CD8-positive, alpha-beta T cell (primary cell): ENCODE measurements at regions of chr1 and their contacts with region 1.

Region 1: GRCh38 chr1:9629445-9630201 is 21.9 kb upstream of the PIK3CD start:
- DNase-seq: peak; percentile 50 to 92 (median 83)
- ATAC-seq: peak; percentile 42
- H3K4me3 ChIP-seq: peak overlapping the region; percentile 85 to 98
- H3K4me3 Mint-ChIP-seq: peak overlapping the region; percentile 98
- H3K27ac ChIP-seq: peak overlapping the region; percentile 79 to 81
- H3K27ac Mint-ChIP-seq: peak overlapping the region; percentile 98
- H3K4me1 ChIP-seq: peaks cover 66% of the 10 kb centered on the region
- H3K4me1 Mint-ChIP-seq: peaks cover 68% of the 10 kb centered on the region
- H3K27me3 ChIP-seq: no peaks in the 10 kb centered on the region
- H3K27me3 Mint-ChIP-seq: no peaks in the 10 kb centered on the region
- CTCF ChIP-seq: no peak

Region 2: GRCh38 chr1:8858888-8859706 is 770.5 kb before region 1 on chr1:
- CTCF ChIA-PET with region 1: no interaction called
- POLR2A ChIA-PET with region 1: no interaction called
- intact Hi-C with region 1: no loop called
- DNase-seq: peak in 7 of 9 experiments; percentile 37 to 76 (median 59)
- ATAC-seq: peak; percentile 79
- H3K4me3 ChIP-seq: no peak overlapping the region
- H3K4me3 Mint-ChIP-seq: no peak overlapping the region
- H3K27ac ChIP-seq: peak overlapping the region in 1 of 2 experiments; percentile 31
- H3K27ac Mint-ChIP-seq: peak overlapping the region; percentile 77
- H3K4me1 ChIP-seq: no peaks in the 10 kb centered on the region
- H3K4me1 Mint-ChIP-seq: peaks cover 15% of the 10 kb centered on the region
- H3K27me3 ChIP-seq: no peaks in the 10 kb centered on the region
- H3K27me3 Mint-ChIP-seq: no peaks in the 10 kb centered on the region
- CTCF ChIP-seq: peak; percentile 65

Region 3: GRCh38 chr1:9428601-9429341 is 200.9 kb before region 1 on chr1:
- CTCF ChIA-PET with region 1: no interaction called
- POLR2A ChIA-PET with region 1: no interaction called
- intact Hi-C with region 1: loop called in 1 of 2 experiments (anchors 5 kb)
- DNase-seq: peak; percentile 99 to 100 (median 100)
- ATAC-seq: peak; percentile 79
- H3K4me3 ChIP-seq: peak overlapping the region; percentile 51 to 54
- H3K4me3 Mint-ChIP-seq: peak overlapping the region; percentile 97
- H3K27ac ChIP-seq: peak overlapping the region; percentile 64 to 69
- H3K27ac Mint-ChIP-seq: peak overlapping the region; percentile 99
- H3K4me1 ChIP-seq: peaks cover 44% of the 10 kb centered on the region
- H3K4me1 Mint-ChIP-seq: peaks cover 51% of the 10 kb centered on the region
- H3K27me3 ChIP-seq: peaks cover 0 to 4% of the 10 kb centered on the region in 2 experiments
- H3K27me3 Mint-ChIP-seq: no peaks in the 10 kb centered on the region
- CTCF ChIP-seq: no peak

Region 4: GRCh38 chr1:9651565-9652378 is 22.1 kb after region 1 on chr1 and contains the start of gene PIK3CD:
- CTCF ChIA-PET with region 1: interaction called, 129 read pairs
- POLR2A ChIA-PET with region 1: interaction called, 357 read pairs
- intact Hi-C with region 1: loop called (anchors 1 kb)
- DNase-seq: peak in 8 of 9 experiments; percentile 21 to 76 (median 56)
- ATAC-seq: peak; percentile 45
- H3K4me3 ChIP-seq: peak within 1 kb of the TSS; percentile 86
- H3K4me3 Mint-ChIP-seq: peak within 1 kb of the TSS; percentile 100
- H3K27ac ChIP-seq: peak within 1 kb of the TSS; percentile 68 to 78
- H3K27ac Mint-ChIP-seq: peak within 1 kb of the TSS; percentile 99
- H3K4me1 ChIP-seq: peaks cover 59% of the 10 kb centered on the region
- H3K4me1 Mint-ChIP-seq: peaks cover 71% of the 10 kb centered on the region
- H3K27me3 ChIP-seq: no peaks in the 10 kb centered on the region
- H3K27me3 Mint-ChIP-seq: no peaks in the 10 kb centered on the region
- CTCF ChIP-seq: no peak
- total RNA-seq, gene PIK3CD: 200 to 214 TPM

Region 5: DNA sequence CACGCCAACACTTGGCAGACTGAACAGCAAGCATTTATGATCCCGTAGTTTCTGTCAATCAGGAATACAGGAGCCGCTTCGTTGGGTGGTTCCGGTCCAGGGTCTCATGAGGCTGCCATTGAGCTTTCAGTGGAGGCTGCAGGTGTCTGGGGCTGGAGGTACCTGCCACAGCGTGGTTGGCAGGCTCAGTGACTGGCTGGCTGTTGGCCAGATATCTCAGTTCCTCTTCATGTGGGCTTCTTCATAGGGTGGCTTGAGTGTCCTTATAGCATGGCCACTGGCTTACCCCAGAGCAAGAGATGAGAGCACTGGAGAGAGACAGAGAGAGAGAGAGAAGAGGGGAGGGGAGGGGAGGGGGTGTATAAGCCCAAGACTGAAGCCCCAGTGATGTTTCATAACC is 51.2 kb after region 1 on chr1:
- CTCF ChIA-PET with region 1: interaction called, 41 read pairs
- POLR2A ChIA-PET with region 1: interaction called, 6 read pairs
- intact Hi-C with region 1: no loop called
- DNase-seq: no peak
- ATAC-seq: no peak
- H3K4me3 ChIP-seq: no peak overlapping the region
- H3K4me3 Mint-ChIP-seq: no peak overlapping the region
- H3K27ac ChIP-seq: peak overlapping the region in 1 of 2 experiments; percentile 17
- H3K27ac Mint-ChIP-seq: peak overlapping the region; percentile 90
- H3K4me1 ChIP-seq: peaks cover 74% of the 10 kb centered on the region
- H3K4me1 Mint-ChIP-seq: peaks cover 68% of the 10 kb centered on the region
- H3K27me3 ChIP-seq: no peaks in the 10 kb centered on the region
- H3K27me3 Mint-ChIP-seq: no peaks in the 10 kb centered on the region
- CTCF ChIP-seq: no peak

Region 6: DNA sequence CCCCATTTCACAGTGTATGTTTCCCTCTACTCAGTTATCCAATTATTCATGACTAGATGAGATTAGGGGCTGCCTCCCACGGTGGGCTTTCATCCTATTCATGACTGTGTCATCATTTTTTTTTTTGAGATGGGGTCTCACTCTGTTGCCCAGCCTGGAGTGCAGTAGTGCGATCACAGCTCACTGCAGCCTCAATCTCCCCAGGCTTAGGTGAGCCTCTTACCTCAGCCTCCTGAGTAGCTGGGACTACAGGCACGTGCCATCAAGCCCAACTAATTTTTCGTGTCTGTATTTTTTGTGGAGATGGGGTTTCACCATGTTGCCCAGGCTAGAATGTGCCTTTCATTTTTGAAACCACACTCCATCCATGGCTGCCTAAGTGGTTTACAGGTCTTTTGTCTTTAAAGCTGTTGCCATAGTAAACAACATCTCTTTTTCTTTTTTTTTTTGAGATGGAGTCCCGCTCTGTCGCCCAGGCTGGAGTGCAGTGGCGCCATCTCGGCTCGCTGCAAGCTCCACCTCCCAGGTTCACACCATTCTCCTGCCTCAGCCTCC is 81.9 kb after region 1 on chr1:
- CTCF ChIA-PET with region 1: interaction called, 319 read pairs
- POLR2A ChIA-PET with region 1: interaction called, 323 read pairs
- intact Hi-C with region 1: no loop called
- DNase-seq: peak in 2 of 9 experiments; percentile 60 to 75
- ATAC-seq: no peak
- H3K4me3 ChIP-seq: no peak overlapping the region
- H3K4me3 Mint-ChIP-seq: no peak overlapping the region
- H3K27ac ChIP-seq: peak overlapping the region; percentile 4 to 7
- H3K27ac Mint-ChIP-seq: peak overlapping the region; percentile 70
- H3K4me1 ChIP-seq: peaks cover 62% of the 10 kb centered on the region
- H3K4me1 Mint-ChIP-seq: peaks cover 58% of the 10 kb centered on the region
- H3K27me3 ChIP-seq: no peaks in the 10 kb centered on the region
- H3K27me3 Mint-ChIP-seq: no peaks in the 10 kb centered on the region
- CTCF ChIP-seq: no peak

Region 7: GRCh38 chr1:9730096-9730901 is 100.7 kb after region 1 on chr1:
- CTCF ChIA-PET with region 1: interaction called, 319 read pairs
- POLR2A ChIA-PET with region 1: interaction called, 12 read pairs
- intact Hi-C with region 1: loop called (anchors 1 to 2 kb)
- DNase-seq: peak in 1 of 9 experiments; percentile 44
- ATAC-seq: no peak
- H3K4me3 ChIP-seq: no peak overlapping the region
- H3K4me3 Mint-ChIP-seq: peak overlapping the region; percentile 44
- H3K27ac ChIP-seq: peak overlapping the region in 1 of 2 experiments; percentile 39
- H3K27ac Mint-ChIP-seq: peak overlapping the region; percentile 89
- H3K4me1 ChIP-seq: peaks cover 64% of the 10 kb centered on the region
- H3K4me1 Mint-ChIP-seq: peaks cover 68% of the 10 kb centered on the region
- H3K27me3 ChIP-seq: no peaks in the 10 kb centered on the region
- H3K27me3 Mint-ChIP-seq: no peaks in the 10 kb centered on the region
- CTCF ChIP-seq: no peak

Region 8: GRCh38 chr1:10430216-10431069 is 800.8 kb after region 1 on chr1 and contains the start of gene CENPS:
- CTCF ChIA-PET with region 1: no interaction called
- POLR2A ChIA-PET with region 1: no interaction called
- intact Hi-C with region 1: loop called in 1 of 2 experiments (anchors 5 kb)
- DNase-seq: peak; percentile 72 to 95 (median 92)
- ATAC-seq: peak; percentile 85
- H3K4me3 ChIP-seq: peak within 1 kb of the TSS; percentile 85 to 96
- H3K4me3 Mint-ChIP-seq: peak within 1 kb of the TSS; percentile 89
- H3K27ac ChIP-seq: peak within 1 kb of the TSS; percentile 81 to 86
- H3K27ac Mint-ChIP-seq: peak within 1 kb of the TSS; percentile 91
- H3K4me1 ChIP-seq: peaks cover 18% of the 10 kb centered on the region
- H3K4me1 Mint-ChIP-seq: peaks cover 23% of the 10 kb centered on the region
- H3K27me3 ChIP-seq: no peaks in the 10 kb centered on the region
- H3K27me3 Mint-ChIP-seq: no peaks in the 10 kb centered on the region
- CTCF ChIP-seq: peak; percentile 97
- total RNA-seq, gene CENPS: 2.0 to 3.5 TPM